Heart right ventricle (tissue), 16 donors: ENCODE measurements at regions of chr16 and their contacts with region 1.

Region 1: DNA sequence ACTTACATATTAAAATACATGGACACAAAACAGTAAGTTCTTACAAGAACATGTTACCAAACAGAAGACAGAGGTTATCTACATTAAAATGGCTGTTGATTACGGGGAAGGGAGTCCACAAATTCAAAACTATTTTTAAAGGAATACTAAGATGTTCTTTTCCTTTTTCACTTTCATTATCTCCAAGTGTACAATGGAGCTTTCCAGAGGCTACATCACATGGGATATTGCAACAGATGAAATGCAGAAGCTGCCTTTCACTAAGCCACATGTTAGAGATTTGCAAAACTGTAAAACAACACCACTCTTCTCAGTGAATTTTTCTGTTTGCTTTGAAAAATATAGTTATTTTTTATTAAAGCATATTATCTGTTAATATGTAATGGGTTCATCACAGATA is 53.6 kb downstream of the XPO6 start:
- DNase-seq: no peak
- ATAC-seq: peak in 7 of 8 donors; percentile 43 to 81 (median 71)
- H3K4me3 ChIP-seq: peak overlapping the region in 1 of 10 donors; percentile 5
- H3K27ac ChIP-seq: peak overlapping the region in 6 of 10 donors; percentile 7 to 86 (median 34)
- H3K4me1 ChIP-seq: peaks cover 0 to 55% (median 13%) of the 10 kb centered on the region in 9 donors
- H3K27me3 ChIP-seq: no peaks in the 10 kb centered on the region
- CTCF ChIP-seq: no peak

Region 2: GRCh38 chr16:28106467-28107215 is 51.5 kb before region 1 on chr16:
- intact Hi-C with region 1: loop called in 1 of 10 experiments (anchors 10 kb)
- DNase-seq: no peak
- ATAC-seq: no peak
- H3K4me3 ChIP-seq: no peak overlapping the region
- H3K27ac ChIP-seq: no peak overlapping the region
- H3K4me1 ChIP-seq: peaks cover 0 to 23% (median 0%) of the 10 kb centered on the region in 9 donors
- H3K27me3 ChIP-seq: no peaks in the 10 kb centered on the region
- CTCF ChIP-seq: no peak

Region 3: DNA sequence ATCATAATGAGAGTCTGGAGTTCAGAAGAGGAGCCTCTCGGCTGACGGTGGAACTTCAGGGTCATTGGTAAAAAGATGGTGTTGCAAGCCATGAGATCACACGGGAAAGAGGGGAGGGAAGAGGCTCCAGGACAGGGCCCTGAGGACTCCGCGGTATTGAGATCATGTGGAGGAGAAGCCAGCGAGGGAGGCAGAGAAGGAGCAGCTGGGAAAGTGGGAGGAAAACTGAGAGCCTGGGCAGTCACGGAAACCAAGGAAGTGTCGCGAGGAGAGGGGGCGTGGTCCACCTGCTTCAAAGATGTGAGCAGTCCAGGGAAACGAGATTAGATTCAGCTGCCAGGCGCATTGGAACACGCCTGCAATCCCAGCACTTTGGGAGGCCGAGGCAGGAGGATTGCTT is 106.5 kb after region 1 on chr16:
- intact Hi-C with region 1: no loop called
- DNase-seq: no peak
- ATAC-seq: peak in 1 of 8 donors; percentile 36
- H3K4me3 ChIP-seq: no peak overlapping the region
- H3K27ac ChIP-seq: no peak overlapping the region
- H3K4me1 ChIP-seq: peaks cover 0 to 37% (median 4%) of the 10 kb centered on the region in 9 donors
- H3K27me3 ChIP-seq: peaks cover 0 to 15% (median 1%) of the 10 kb centered on the region in 7 donors
- CTCF ChIP-seq: no peak

Region 4: DNA sequence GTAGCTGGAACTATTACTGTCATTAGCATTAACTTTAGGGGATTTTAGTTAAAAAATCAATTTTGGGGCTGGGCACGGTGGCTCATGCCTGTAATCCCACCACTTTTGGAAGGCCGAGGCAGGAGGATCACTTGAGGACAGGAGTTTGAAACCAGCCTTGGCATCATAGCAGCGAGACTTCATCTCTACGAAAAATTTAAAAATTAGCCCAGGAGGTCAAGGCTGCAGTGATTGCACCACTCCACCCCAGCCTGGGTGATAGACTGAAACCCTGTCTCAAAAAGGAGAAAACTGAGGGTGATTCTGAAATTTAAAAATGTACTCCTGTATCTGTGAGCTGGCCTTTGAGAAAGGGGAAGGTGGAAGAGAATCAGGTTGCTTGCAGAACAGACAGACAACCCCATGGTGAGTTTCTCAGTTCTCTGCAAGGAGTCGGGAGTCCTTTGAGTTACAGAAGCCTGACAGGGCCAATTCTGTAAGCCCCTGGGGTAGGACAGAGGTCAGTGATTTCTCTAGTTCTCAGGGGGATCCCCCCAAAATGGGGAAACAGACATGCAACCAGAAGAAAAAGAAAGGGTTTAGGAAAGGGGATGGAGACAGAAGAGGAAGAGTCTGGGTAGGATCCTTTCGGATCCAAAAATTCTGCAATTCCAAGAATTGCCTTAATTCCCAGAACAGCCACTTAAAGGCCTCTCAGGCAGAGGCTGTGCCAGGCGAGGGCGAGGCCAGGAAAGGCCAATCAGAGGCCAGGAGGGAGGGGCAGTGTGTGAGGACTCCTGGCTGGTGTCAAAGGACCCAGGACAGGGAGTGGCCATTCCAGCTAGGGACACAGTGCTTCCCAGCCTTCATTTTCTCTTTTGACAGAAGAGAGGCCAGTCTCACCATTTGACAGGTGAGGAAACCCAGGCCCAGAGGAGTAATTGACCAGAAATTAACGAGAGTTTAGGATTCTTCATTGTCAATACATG is 373.9 kb after region 1 on chr16:
- intact Hi-C with region 1: no loop called
- DNase-seq: peak; percentile 73 to 79
- ATAC-seq: peak; percentile 91 to 96 (median 96)
- H3K4me3 ChIP-seq: no peak overlapping the region
- H3K27ac ChIP-seq: peak overlapping the region in 9 of 10 donors; percentile 9 to 60 (median 37)
- H3K4me1 ChIP-seq: peaks cover 0 to 51% (median 12%) of the 10 kb centered on the region in 9 donors
- H3K27me3 ChIP-seq: no peaks in the 10 kb centered on the region
- CTCF ChIP-seq: no peak